Activated T-helper 2 cell treated with anti-CD3 and anti-CD28 coated beads, Interferon-gamma antibody, Interleukin-2, Interleukin-4, amounts not matched to agents 10 μg/mL and 5 μg/mL and 100 μg/mL, durations not matched to agents 14 hours and 24 hours and 36 hours (primary cell): ENCODE measurements at regions of chr17 and their contacts with region 1.

Region 1: GRCh38 chr17:64608540-64608981 is 53.5 kb downstream of the SMURF2 start:
- DNase-seq: no peak
- H3K4me3 Mint-ChIP-seq: no peak overlapping the region
- H3K27ac Mint-ChIP-seq: peak overlapping the region; percentile 78
- H3K4me1 Mint-ChIP-seq: peaks cover 19% of the 10 kb centered on the region
- H3K27me3 Mint-ChIP-seq: no peaks in the 10 kb centered on the region

Region 2: GRCh38 chr17:64580384-64581315 is 27.9 kb before region 1 on chr17:
- intact Hi-C with region 1: loop called (anchors 2 kb)
- DNase-seq: no peak
- H3K4me3 Mint-ChIP-seq: peak overlapping the region; percentile 42
- H3K27ac Mint-ChIP-seq: peak overlapping the region; percentile 97
- H3K4me1 Mint-ChIP-seq: peaks cover 19% of the 10 kb centered on the region
- H3K27me3 Mint-ChIP-seq: no peaks in the 10 kb centered on the region

Region 3: GRCh38 chr17:64635647-64636307 is 27.2 kb after region 1 on chr17:
- intact Hi-C with region 1: loop called (anchors 1 kb)
- DNase-seq: no peak
- H3K4me3 Mint-ChIP-seq: no peak overlapping the region
- H3K27ac Mint-ChIP-seq: peak overlapping the region; percentile 96
- H3K4me1 Mint-ChIP-seq: peaks cover 40% of the 10 kb centered on the region
- H3K27me3 Mint-ChIP-seq: no peaks in the 10 kb centered on the region

Region 4: DNA sequence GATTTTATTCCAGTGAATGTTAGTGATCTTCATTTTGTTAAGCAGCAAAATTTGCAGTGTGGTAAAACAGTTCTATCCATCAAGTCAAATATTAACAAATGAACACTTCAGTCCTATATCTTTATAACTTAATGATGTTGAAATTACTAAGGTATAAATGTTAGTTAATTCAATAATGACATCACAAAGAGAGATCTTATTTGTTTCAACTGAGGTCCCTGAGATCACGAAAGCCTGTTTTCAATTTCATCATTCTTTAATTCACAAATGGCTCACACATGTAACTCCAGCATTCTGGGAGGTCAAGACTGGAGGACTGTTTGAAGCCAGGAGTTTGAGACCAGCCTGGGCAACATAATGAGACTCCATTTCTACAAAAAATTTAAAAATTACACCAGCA is 39.7 kb after region 1 on chr17:
- intact Hi-C with region 1: loop called (anchors 5 kb)
- DNase-seq: no peak
- H3K4me3 Mint-ChIP-seq: no peak overlapping the region
- H3K27ac Mint-ChIP-seq: no peak overlapping the region
- H3K4me1 Mint-ChIP-seq: peaks cover 20% of the 10 kb centered on the region
- H3K27me3 Mint-ChIP-seq: no peaks in the 10 kb centered on the region